ENCODE measurements at regions of chr13 and their contacts with region 1.

Region 1: DNA sequence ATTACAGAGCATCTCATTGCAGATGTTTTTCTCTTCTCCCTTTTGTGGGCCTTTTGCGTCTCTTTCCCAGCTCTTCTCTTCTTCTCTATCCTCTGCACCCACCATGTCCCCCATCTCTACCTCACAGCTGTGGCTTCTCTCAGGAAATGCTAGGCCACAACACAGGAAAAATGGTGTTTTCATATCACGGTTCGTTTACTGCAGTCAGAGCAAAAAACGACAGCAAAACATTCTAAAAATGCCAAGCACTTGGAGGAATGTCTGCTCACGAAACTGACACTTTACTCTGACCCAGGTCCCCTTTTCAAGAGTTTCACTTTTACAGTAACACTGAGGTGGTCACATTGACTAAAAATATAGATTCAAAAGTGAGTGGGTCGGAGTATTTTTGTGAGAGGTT is 152.2 kb downstream of the DCT start:
- DNase-seq: peak; percentile 13
- H3K4me3 Mint-ChIP-seq: peak overlapping the region; percentile 24
- H3K27ac Mint-ChIP-seq: peak overlapping the region; percentile 75
- H3K4me1 Mint-ChIP-seq: peaks cover 82% of the 10 kb centered on the region
- H3K27me3 Mint-ChIP-seq: peaks cover 7% of the 10 kb centered on the region

Region 2: DNA sequence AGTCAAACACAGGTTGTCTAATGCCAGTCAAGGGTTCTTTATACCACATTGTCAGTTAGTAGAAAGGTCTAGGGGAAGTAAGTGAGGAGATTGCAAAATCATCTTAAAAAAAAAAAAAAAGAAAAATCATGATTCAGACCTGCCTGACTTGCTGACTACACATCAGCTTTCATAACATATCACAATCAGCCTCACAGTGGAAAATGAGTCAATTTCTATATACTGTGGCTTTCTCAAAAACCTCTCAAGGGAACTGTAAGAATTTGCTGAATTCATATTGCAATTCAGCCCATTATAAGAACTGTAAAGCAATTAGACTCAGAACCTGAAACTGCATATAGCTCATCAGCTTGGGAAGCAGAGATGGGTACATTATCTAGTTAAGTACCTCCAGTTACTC is 1176.0 kb before region 1 on chr13:
- intact Hi-C with region 1: no loop called
- DNase-seq: no peak
- H3K4me3 Mint-ChIP-seq: no peak overlapping the region
- H3K27ac Mint-ChIP-seq: no peak overlapping the region
- H3K4me1 Mint-ChIP-seq: no peaks in the 10 kb centered on the region
- H3K27me3 Mint-ChIP-seq: no peaks in the 10 kb centered on the region

Region 3: GRCh38 chr13:93794197-93794885 is 533.0 kb before region 1 on chr13:
- intact Hi-C with region 1: loop called (anchors 5 kb)
- DNase-seq: peak; percentile 5
- H3K4me3 Mint-ChIP-seq: no peak overlapping the region
- H3K27ac Mint-ChIP-seq: peak overlapping the region; percentile 59
- H3K4me1 Mint-ChIP-seq: peaks cover 10% of the 10 kb centered on the region
- H3K27me3 Mint-ChIP-seq: peaks cover 5% of the 10 kb centered on the region

Region 4: GRCh38 chr13:94280349-94280748 is 47.0 kb before region 1 on chr13:
- intact Hi-C with region 1: no loop called
- DNase-seq: no peak
- H3K4me3 Mint-ChIP-seq: no peak overlapping the region
- H3K27ac Mint-ChIP-seq: no peak overlapping the region
- H3K4me1 Mint-ChIP-seq: no peaks in the 10 kb centered on the region
- H3K27me3 Mint-ChIP-seq: peaks cover 9% of the 10 kb centered on the region

Region 5: GRCh38 chr13:94303644-94304174 is 23.6 kb before region 1 on chr13:
- intact Hi-C with region 1: no loop called
- DNase-seq: no peak
- H3K4me3 Mint-ChIP-seq: no peak overlapping the region
- H3K27ac Mint-ChIP-seq: no peak overlapping the region
- H3K4me1 Mint-ChIP-seq: peaks cover 13% of the 10 kb centered on the region
- H3K27me3 Mint-ChIP-seq: peaks cover 4% of the 10 kb centered on the region

Region 6: DNA sequence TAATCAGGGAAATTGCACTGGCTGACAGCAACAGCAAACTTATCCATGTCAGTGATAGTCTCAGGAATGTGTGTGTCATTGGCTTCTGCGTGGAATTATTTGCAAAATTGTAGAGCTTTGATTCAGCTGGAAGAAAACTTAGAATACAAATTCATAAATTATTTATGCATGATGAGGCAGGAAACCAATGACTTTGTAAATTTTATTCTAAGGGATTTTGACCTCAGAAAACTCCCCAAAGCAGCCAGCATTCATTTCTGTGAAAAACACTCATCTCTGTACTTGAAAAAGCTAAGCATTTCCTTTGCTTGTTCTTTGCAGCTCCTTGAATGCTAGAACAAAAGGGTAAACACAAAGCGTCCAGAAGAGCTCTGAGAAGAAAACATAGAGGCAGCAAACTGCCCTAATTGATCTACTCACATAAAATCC is 10.2 kb before region 1 on chr13:
- intact Hi-C with region 1: loop called (anchors 1 kb)
- DNase-seq: peak; percentile 13
- H3K4me3 Mint-ChIP-seq: peak overlapping the region; percentile 44
- H3K27ac Mint-ChIP-seq: peak overlapping the region; percentile 86
- H3K4me1 Mint-ChIP-seq: peaks cover 80% of the 10 kb centered on the region
- H3K27me3 Mint-ChIP-seq: no peaks in the 10 kb centered on the region

Region 7: GRCh38 chr13:94351292-94351990 is 24.1 kb after region 1 on chr13:
- intact Hi-C with region 1: loop called (anchors 1 kb)
- DNase-seq: no peak
- H3K4me3 Mint-ChIP-seq: no peak overlapping the region
- H3K27ac Mint-ChIP-seq: peak overlapping the region; percentile 57
- H3K4me1 Mint-ChIP-seq: peaks cover 23% of the 10 kb centered on the region
- H3K27me3 Mint-ChIP-seq: peaks cover 3% of the 10 kb centered on the region

Region 8: DNA sequence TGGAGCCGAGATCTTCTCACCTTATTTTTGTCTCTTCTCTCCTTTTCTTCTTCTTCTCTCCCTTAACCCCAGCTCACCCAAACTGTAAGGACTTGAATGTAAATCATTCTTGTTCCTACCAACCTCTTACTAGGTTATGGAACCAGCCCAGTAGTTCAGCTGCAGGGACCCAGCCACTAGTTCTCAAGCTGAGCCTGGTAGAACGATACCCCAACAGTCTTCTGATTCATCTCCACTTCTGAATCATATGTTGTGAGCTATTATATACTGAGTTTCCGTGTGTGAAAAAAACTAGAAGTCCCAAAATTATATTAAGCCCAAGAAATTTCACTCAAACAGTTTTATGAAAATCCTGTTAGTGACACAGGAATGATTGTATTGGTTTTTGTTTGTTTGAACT is 84.4 kb after region 1 on chr13:
- intact Hi-C with region 1: no loop called
- DNase-seq: no peak
- H3K4me3 Mint-ChIP-seq: no peak overlapping the region
- H3K27ac Mint-ChIP-seq: no peak overlapping the region
- H3K4me1 Mint-ChIP-seq: no peaks in the 10 kb centered on the region
- H3K27me3 Mint-ChIP-seq: no peaks in the 10 kb centered on the region

Region 9: DNA sequence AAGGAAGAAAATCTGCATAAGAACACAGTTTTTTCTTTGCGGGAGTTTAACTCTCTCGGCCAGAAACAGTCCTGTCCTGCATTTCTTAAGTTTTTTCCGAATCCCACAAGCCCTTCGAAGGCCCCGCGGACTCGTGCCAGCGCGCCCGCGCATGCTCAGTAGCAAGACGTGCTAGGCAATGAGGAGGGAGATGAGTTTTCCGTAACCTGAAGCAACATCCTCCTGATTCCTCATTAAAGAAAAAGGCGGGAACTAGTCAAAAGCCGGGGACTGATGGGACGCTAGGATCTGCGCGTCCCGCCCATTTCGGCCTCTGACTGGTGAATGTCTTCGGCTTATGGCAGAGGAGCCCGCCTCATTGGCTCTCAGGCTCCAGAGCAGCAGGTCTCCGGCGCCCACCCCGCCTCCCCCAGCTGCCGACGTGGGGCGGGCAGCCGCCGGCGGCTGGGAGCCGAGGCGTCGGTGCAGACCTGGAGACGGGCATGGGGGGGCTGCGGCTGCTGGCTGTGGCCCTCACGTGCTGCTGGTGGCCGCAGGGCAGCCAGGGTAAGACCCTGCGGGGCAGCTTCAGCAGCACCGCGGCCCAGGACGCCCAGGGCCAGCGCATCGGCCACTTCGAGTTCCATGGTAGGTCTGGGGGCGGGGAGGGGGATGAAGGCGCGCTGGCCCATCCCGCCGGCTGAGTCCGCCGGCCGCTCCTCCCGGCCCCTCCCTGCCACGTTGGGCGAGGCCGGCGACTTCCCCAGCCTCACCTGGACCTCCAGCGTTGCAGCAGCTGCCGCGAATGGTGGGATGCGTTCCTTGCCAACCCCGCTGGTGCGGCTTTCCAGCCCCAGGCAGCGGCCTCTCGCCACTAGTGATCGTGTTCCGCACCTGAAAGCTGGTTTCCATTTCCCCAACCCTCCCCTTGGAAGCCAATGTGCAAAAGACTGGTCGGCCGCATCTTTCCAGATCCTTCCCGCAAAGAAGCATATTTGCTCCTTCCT is 274.4 kb after region 1 on chr13 and contains the start of gene GPR180:
- intact Hi-C with region 1: loop called (anchors 5 kb)
- DNase-seq: peak; percentile 89
- H3K4me3 Mint-ChIP-seq: peak within 1 kb of the TSS; percentile 88
- H3K27ac Mint-ChIP-seq: peak within 1 kb of the TSS; percentile 75
- H3K4me1 Mint-ChIP-seq: peaks cover 31% of the 10 kb centered on the region
- H3K27me3 Mint-ChIP-seq: no peaks in the 10 kb centered on the region
- total RNA-seq, gene GPR180: 9.6 and 11.1 TPM in 2 replicates